ENCODE measurements at regions of chr19 and their contacts with region 1.

Region 1: DNA sequence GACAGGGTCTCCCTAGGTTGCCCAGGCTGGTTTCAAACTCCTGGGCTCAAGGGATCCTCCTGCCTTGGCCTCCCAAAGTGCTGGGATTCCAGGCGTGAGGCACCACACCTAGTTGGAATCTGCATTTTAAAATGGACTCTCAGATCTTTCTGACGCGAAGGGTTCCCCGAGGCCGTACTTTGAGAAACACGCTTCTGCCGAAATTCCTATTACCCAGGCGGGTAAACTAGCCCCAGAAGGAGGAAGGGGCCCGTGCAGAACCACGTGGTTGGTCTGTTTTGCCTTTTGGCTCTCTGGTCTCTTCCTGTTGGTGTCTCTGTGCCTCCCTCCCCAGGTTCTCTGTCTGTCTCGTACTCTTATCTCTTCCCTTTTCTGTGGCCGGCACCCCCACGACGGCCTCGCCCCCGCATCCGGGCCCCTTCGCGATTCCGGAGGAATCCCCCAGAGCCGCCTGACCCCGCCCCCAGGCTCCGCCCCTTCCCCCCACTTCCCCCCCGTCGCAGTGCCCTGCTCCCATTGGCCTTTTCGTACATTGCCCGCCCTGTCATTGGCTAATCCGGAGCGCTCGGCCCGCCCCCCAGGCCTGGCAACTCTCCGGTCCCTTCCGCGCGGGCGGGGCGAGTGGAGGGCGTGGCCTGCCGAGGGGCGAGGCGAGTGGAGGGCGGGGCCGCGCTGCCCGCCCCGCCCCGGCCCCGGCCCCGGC is at the start of gene TNFAIP8L1:
- DNase-seq: peak; percentile 99
- total RNA-seq, gene TNFAIP8L1: 5.7 to 6.1 TPM

Region 2: DNA sequence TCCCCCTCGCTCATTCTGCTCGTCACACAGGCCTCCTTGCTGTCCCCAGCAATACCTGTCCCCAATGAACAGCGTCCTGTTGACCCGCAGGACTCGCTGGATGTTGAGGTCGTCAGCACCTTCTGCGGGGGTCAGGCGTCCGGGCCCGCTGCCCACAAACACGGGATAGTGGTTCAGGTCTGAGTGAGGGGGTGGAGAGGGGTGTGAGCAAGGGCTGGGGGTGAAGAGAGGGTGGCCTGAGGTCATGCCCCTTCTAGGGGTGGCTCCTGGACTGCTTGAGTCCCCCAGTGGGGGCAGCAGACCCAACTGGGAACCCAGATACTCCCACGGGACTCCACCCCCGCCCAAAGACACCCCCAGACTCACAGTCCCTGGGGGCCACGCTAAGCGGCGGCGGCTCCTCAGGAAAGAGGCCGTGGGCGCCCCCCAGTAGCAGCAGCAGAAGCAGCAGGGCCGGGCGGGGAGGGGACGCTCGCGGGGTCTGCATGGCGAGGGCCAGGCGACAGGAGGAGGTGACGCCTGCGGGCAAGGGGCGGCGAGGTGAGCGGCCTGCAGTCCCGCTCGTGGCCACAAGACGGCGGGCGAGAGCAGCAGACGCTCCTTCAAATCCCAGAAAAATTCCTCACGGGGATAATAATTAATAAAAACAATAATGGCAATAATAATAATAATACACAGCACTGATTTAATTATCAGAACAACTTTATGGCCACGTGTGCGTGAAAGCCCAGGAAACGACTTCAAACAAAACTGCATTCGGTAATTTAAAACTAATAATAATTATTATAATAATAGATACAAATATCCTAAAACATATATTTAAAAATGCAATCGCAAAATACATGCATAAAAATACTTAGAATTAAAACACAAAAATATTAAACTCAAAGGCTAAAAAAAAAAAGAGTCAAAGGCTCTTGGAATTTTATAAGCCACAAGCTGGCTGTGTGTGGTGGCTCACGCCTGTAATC is 80.7 kb before region 1 on chr19:
- intact Hi-C with region 1: loop called in 1 of 2 experiments (anchors 5 kb)
- DNase-seq: no peak

Region 3: GRCh38 chr19:4576016-4576933 is 62.7 kb before region 1 on chr19:
- intact Hi-C with region 1: loop called in 1 of 2 experiments (anchors 10 kb)
- DNase-seq: no peak

Measured in posterior vena cava (tissue), 2 donors.